HCT116 (cell line): ENCODE measurements at regions of chr14 and their contacts with region 1.

Region 1: GRCh38 chr14:57199921-57200320 is 68.8 kb downstream of the EXOC5 start:
- DNase-seq: no peak
- ATAC-seq: no peak
- H3K4me3 ChIP-seq: no peak overlapping the region
- H3K27ac ChIP-seq: no peak overlapping the region
- H3K4me1 ChIP-seq: no peaks in the 10 kb centered on the region
- H3K27me3 ChIP-seq: no peaks in the 10 kb centered on the region
- CTCF ChIP-seq: no peak
- POLR2A ChIP-seq: no peak
- RAD21 ChIP-seq: no peak

Region 2: DNA sequence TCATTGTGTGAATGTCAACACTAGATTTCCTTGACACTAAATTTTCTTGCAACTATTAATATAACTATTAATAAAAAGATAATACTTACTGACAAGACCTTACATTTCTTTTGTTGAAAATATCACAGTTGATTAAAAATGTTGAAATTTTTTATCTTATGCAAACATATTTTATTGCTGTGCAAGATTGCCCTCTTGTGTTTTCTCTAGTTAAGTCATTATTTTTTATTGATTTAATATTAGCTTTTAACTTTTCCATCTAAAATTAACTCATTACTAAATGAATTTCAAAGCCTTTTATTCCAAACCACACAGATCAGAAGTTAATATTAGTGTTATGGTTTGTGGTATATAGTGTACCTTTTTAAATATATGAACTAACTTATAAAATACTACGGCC is 178.7 kb after region 1 on chr14:
- CTCF ChIA-PET with region 1: no interaction called
- POLR2A ChIA-PET with region 1: no interaction called
- RAD21 ChIA-PET with region 1: no interaction called
- intact Hi-C with region 1: loop called (anchors 10 kb)
- DNase-seq: no peak
- ATAC-seq: no peak
- H3K4me3 ChIP-seq: no peak overlapping the region
- H3K27ac ChIP-seq: no peak overlapping the region
- H3K4me1 ChIP-seq: peaks cover 0 to 14% of the 10 kb centered on the region in 2 experiments; a peak in 2 of 4 replicates
- H3K27me3 ChIP-seq: no peaks in the 10 kb centered on the region
- CTCF ChIP-seq: peak in 1 of 3 experiments; percentile 31; a peak in 2 of 6 replicates
- POLR2A ChIP-seq: no peak
- RAD21 ChIP-seq: peak; percentile 57

Region 3: GRCh38 chr14:58488550-58488949 is 1288.6 kb after region 1 on chr14:
- CTCF ChIA-PET with region 1: no interaction called
- POLR2A ChIA-PET with region 1: no interaction called
- RAD21 ChIA-PET with region 1: no interaction called
- intact Hi-C with region 1: loop called (anchors 10 kb)
- DNase-seq: no peak
- ATAC-seq: no peak
- H3K4me3 ChIP-seq: no peak overlapping the region
- H3K27ac ChIP-seq: no peak overlapping the region
- H3K4me1 ChIP-seq: no peaks in the 10 kb centered on the region
- H3K27me3 ChIP-seq: no peaks in the 10 kb centered on the region
- CTCF ChIP-seq: no peak
- POLR2A ChIP-seq: no peak
- RAD21 ChIP-seq: no peak